H1 (cell line): ENCODE measurements at regions of chrX and their contacts with region 1.

Region 1: GRCh38 chrX:53081925-53082772 is at the start of gene TSPYL2:
- DNase-seq: peak; percentile 89 to 90
- H3K4me3 ChIP-seq: peak within 1 kb of the TSS; percentile 66 to 87 (median 68)
- H3K27ac ChIP-seq: peak within 1 kb of the TSS; percentile 83; the same call in 1 of the 2 replicates
- H3K4me1 ChIP-seq: no peaks in the 10 kb centered on the region; a peak in 2 of 7 replicates
- H3K27me3 ChIP-seq: no peaks in the 10 kb centered on the region
- CTCF ChIP-seq: no peak
- EP300 ChIP-seq: no peak
- POLR2A ChIP-seq: peak; percentile 98
- RAD21 ChIP-seq: no peak
- total RNA-seq, gene TSPYL2: 13.7 and 14.0 TPM in 2 replicates

Region 2: DNA sequence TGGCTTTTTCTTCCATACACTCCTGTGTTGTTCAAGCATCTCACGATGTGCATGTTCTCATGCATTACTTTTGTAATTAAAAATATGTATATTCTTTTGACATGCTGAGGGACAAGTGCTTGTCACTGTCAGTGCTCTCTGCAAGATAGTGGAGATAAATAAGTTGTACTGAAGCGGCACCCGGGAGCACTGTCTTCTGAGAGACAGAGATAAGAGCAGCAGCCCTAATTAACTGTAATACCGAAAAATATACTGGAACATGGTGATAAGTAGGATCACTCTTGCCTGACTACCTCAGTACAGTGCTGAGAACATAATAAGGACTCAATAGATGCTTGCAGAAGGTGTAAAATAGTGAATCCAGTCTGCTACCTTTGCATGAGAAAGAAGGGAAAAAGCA is 42.9 kb before region 1 on chrX:
- CTCF ChIA-PET with region 1: no interaction called
- POLR2A ChIA-PET with region 1: no interaction called
- DNase-seq: no peak
- H3K4me3 ChIP-seq: no peak overlapping the region
- H3K27ac ChIP-seq: no peak overlapping the region
- H3K4me1 ChIP-seq: no peaks in the 10 kb centered on the region
- H3K27me3 ChIP-seq: no peaks in the 10 kb centered on the region
- CTCF ChIP-seq: no peak
- EP300 ChIP-seq: no peak
- POLR2A ChIP-seq: no peak
- RAD21 ChIP-seq: no peak

Region 3: GRCh38 chrX:53071604-53072417 is 10.3 kb before region 1 on chrX:
- CTCF ChIA-PET with region 1: interaction called, 3 read pairs
- POLR2A ChIA-PET with region 1: interaction called, 12 read pairs
- DNase-seq: no peak
- H3K4me3 ChIP-seq: peak overlapping the region; percentile 32 to 55 (median 38); a peak in 7 of 8 replicates
- H3K27ac ChIP-seq: no peak overlapping the region
- H3K4me1 ChIP-seq: peaks cover 0 to 5% (median 1%) of the 10 kb centered on the region in 4 experiments; a peak in 1 of 7 replicates
- H3K27me3 ChIP-seq: no peaks in the 10 kb centered on the region
- CTCF ChIP-seq: peak; percentile 30 to 73 (median 61)
- EP300 ChIP-seq: no peak
- POLR2A ChIP-seq: no peak
- RAD21 ChIP-seq: peak; percentile 69 to 77

Region 4: GRCh38 chrX:53294024-53294648 is 212.0 kb after region 1 on chrX:
- CTCF ChIA-PET with region 1: no interaction called
- POLR2A ChIA-PET with region 1: no interaction called
- DNase-seq: no peak
- H3K4me3 ChIP-seq: no peak overlapping the region
- H3K27ac ChIP-seq: no peak overlapping the region
- H3K4me1 ChIP-seq: no peaks in the 10 kb centered on the region; a peak in 2 of 7 replicates
- H3K27me3 ChIP-seq: no peaks in the 10 kb centered on the region
- CTCF ChIP-seq: peak in 2 of 3 experiments; percentile 28 to 29; a peak in 3 of 4 replicates
- EP300 ChIP-seq: no peak
- POLR2A ChIP-seq: no peak
- RAD21 ChIP-seq: peak; percentile 47 to 61; a peak in 3 of 4 replicates